ENCODE measurements at regions of chr6 and their contacts with region 1.

Region 1: GRCh38 chr6:26234421-26235296 is 130.3 kb upstream of the BTN3A2 start:
- DNase-seq: peak; percentile 79
- H3K4me3 Mint-ChIP-seq: peak overlapping the region; percentile 89
- H3K27ac Mint-ChIP-seq: peak overlapping the region; percentile 100
- H3K4me1 Mint-ChIP-seq: peaks cover 52% of the 10 kb centered on the region
- H3K27me3 Mint-ChIP-seq: no peaks in the 10 kb centered on the region

Region 2: DNA sequence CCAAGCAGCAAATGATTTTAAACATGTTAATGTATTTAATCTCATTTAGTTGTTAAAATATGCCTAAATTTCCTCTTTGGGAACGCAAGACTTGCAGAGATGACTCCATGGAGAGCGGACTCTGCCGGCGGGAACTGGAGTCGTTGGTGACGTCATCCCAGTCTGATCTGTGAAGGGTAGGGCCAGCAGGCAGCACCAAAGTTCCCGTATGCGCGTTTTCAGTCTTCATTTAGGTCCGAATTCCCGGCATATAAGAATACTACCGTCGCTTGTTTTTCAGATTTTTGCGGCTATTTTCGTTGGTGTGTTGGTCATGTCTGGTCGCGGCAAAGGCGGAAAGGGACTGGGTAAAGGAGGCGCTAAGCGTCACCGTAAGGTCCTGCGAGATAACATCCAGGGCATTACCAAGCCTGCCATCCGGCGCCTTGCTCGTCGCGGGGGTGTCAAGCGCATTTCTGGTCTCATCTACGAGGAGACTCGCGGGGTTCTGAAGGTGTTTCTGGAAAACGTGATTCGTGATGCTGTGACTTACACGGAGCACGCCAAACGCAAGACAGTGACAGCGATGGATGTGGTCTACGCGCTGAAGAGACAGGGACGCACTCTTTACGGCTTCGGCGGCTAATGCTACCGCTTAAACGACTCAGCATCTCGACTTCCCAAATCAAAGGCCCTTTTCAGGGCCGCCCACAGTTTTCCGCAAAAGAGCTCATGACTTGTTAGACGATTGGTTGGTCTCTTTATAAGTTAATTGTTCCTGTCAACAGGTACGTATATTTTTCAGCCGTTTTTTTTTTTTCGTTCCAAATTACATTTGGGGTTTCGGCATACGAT is 30.1 kb before region 1 on chr6:
- intact Hi-C with region 1: loop called (anchors 1 kb)
- DNase-seq: peak; percentile 82
- H3K4me3 Mint-ChIP-seq: no peak overlapping the region
- H3K27ac Mint-ChIP-seq: no peak overlapping the region
- H3K4me1 Mint-ChIP-seq: peaks cover 33% of the 10 kb centered on the region
- H3K27me3 Mint-ChIP-seq: peaks cover 2% of the 10 kb centered on the region

Region 3: GRCh38 chr6:26223650-26224546 is 10.8 kb before region 1 on chr6:
- intact Hi-C with region 1: loop called (anchors 1 kb)
- DNase-seq: peak; percentile 56
- H3K4me3 Mint-ChIP-seq: no peak overlapping the region
- H3K27ac Mint-ChIP-seq: no peak overlapping the region
- H3K4me1 Mint-ChIP-seq: peaks cover 10% of the 10 kb centered on the region
- H3K27me3 Mint-ChIP-seq: no peaks in the 10 kb centered on the region

Region 4: DNA sequence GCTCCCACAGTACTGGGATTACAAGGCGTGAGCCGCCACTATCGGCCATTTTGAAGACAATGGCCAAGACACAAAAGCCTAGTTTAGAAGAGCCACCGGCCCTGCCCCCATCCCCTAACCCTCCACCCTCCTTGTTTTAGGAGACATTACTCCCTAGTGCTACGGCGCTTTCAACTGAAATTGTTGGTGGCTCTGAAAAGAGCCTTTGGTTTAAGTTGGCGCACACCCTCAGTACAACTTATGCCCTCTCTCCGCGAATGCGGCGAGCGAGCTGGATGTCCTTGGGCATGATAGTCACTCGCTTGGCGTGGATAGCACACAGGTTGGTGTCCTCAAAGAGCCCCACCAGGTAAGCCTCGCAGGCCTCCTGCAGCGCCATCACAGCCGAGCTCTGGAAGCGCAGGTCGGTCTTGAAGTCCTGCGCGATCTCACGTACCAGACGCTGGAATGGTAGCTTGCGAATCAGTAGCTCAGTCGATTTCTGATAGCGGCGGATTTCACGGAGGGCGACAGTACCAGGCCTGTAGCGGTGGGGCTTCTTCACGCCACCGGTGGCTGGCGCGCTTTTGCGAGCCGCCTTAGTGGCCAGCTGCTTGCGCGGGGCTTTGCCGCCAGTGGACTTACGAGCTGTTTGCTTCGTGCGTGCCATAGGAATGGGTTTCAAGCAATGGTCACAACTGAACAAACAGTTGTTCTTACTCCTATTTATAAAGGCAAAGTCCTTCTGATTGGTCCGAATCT is 15.5 kb after region 1 on chr6:
- intact Hi-C with region 1: loop called (anchors 1 kb)
- DNase-seq: peak; percentile 68
- H3K4me3 Mint-ChIP-seq: peak overlapping the region; percentile 90
- H3K27ac Mint-ChIP-seq: peak overlapping the region; percentile 99
- H3K4me1 Mint-ChIP-seq: peaks cover 55% of the 10 kb centered on the region
- H3K27me3 Mint-ChIP-seq: peaks cover 2% of the 10 kb centered on the region

Region 5: GRCh38 chr6:26295691-26296555 is 61.3 kb after region 1 on chr6:
- intact Hi-C with region 1: no loop called
- DNase-seq: no peak
- H3K4me3 Mint-ChIP-seq: peak overlapping the region; percentile 54
- H3K27ac Mint-ChIP-seq: peak overlapping the region; percentile 13
- H3K4me1 Mint-ChIP-seq: peaks cover 22% of the 10 kb centered on the region
- H3K27me3 Mint-ChIP-seq: no peaks in the 10 kb centered on the region

Measured in activated T-helper 1 cell treated with anti-CD3 and anti-CD28 coated beads, Interleukin-12 subunit alpha, Interleukin-12 subunit beta, Interleukin-2, Interleukin-4 antibody, amounts not matched to agents 30 ng/mL and 10 ng/mL and 1 ng/mL, durations not matched to agents 14 hours and 24 hours and 36 hours (primary cell).